Tibial artery (tissue), 4 donors: ENCODE measurements at regions of chr12 and their contacts with region 1.

Region 1: GRCh38 chr12:98064232-98064900 is 451.0 kb upstream of the TMPO start:
- DNase-seq: no peak
- H3K4me3 ChIP-seq: no peak overlapping the region
- H3K27ac ChIP-seq: no peak overlapping the region
- H3K4me1 ChIP-seq: no peaks in the 10 kb centered on the region
- H3K27me3 ChIP-seq: no peaks in the 10 kb centered on the region
- CTCF ChIP-seq: no peak

Region 2: GRCh38 chr12:98037401-98038140 is 26.8 kb before region 1 on chr12:
- intact Hi-C with region 1: loop called (anchors 1 kb)
- DNase-seq: no peak
- H3K4me3 ChIP-seq: no peak overlapping the region
- H3K27ac ChIP-seq: no peak overlapping the region
- H3K4me1 ChIP-seq: no peaks in the 10 kb centered on the region
- H3K27me3 ChIP-seq: no peaks in the 10 kb centered on the region
- CTCF ChIP-seq: no peak